Head of caudate nucleus (tissue), 42 donors: ENCODE measurements at regions of chr12 and their contacts with region 1.

Region 1: GRCh38 chr12:53746592-53747092 is 5.1 kb downstream of the CISTR start:
- DNase-seq: peak; percentile 89 to 98 (median 95)

Region 2: GRCh38 chr12:53659011-53659551 is 87.6 kb before region 1 on chr12:
- intact Hi-C with region 1: no loop called
- DNase-seq: peak in 41 of 42 donors; percentile 42 to 94 (median 77)

Region 3: GRCh38 chr12:53701518-53702260 is 45.0 kb before region 1 on chr12:
- intact Hi-C with region 1: loop called (anchors 2 kb)
- DNase-seq: peak; percentile 79 to 95 (median 90)

Region 4: GRCh38 chr12:53844989-53845844 is 98.6 kb after region 1 on chr12:
- intact Hi-C with region 1: no loop called
- DNase-seq: no peak